ENCODE measurements at regions of chr11 and their contacts with region 1.

Region 1: DNA sequence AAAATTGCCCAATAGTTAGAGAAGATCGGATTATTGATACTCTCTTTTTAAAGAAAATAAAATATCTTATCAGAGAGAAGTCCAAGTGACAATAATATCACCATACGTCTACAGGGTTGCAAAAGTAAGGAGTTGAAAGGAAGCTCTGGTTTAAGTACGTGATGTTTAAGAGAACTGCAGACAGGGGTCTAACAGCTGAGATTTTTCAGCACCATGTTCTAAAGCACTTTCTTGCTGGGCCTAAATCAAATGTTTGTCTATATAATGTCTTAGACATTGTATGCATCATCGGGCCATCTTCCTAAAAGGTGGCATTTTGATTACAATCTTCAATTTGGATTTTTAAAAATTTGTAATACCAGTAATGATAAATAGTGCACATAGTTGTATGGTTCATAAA is 133.3 kb downstream of the RRAS2 start:
- DNase-seq: no peak
- ATAC-seq: no peak
- H3K4me3 ChIP-seq: no peak overlapping the region
- H3K4me3 Mint-ChIP-seq: no peak overlapping the region
- H3K27ac ChIP-seq: no peak overlapping the region
- H3K27ac Mint-ChIP-seq: no peak overlapping the region
- H3K4me1 ChIP-seq: no peaks in the 10 kb centered on the region
- H3K4me1 Mint-ChIP-seq: peaks cover 0 to 3% (median 0%) of the 10 kb centered on the region in 3 donors
- H3K27me3 ChIP-seq: no peaks in the 10 kb centered on the region
- H3K27me3 Mint-ChIP-seq: peaks cover 0 to 4% of the 10 kb centered on the region in 2 donors

Region 2: GRCh38 chr11:13367115-13367514 is 858.6 kb before region 1 on chr11:
- CTCF ChIA-PET with region 1: interaction called in 1 of 2 experiments, 15 read pairs
- POLR2A ChIA-PET with region 1: no interaction called
- DNase-seq: no peak
- ATAC-seq: no peak
- H3K4me3 ChIP-seq: no peak overlapping the region
- H3K4me3 Mint-ChIP-seq: no peak overlapping the region
- H3K27ac ChIP-seq: no peak overlapping the region
- H3K27ac Mint-ChIP-seq: no peak overlapping the region
- H3K4me1 ChIP-seq: no peaks in the 10 kb centered on the region
- H3K4me1 Mint-ChIP-seq: no peaks in the 10 kb centered on the region
- H3K27me3 ChIP-seq: no peaks in the 10 kb centered on the region
- H3K27me3 Mint-ChIP-seq: no peaks in the 10 kb centered on the region

Region 3: GRCh38 chr11:14300661-14301304 is 75.1 kb after region 1 on chr11:
- CTCF ChIA-PET with region 1: no interaction called
- POLR2A ChIA-PET with region 1: no interaction called
- DNase-seq: peak in 33 of 35 experiments; percentile 3 to 70 (median 29)
- ATAC-seq: peak; percentile 68 to 87 (median 80)
- H3K4me3 ChIP-seq: no peak overlapping the region
- H3K4me3 Mint-ChIP-seq: no peak overlapping the region
- H3K27ac ChIP-seq: no peak overlapping the region
- H3K27ac Mint-ChIP-seq: no peak overlapping the region
- H3K4me1 ChIP-seq: peaks cover 0 to 7% of the 10 kb centered on the region in 2 experiments
- H3K4me1 Mint-ChIP-seq: peaks cover 9 to 25% (median 18%) of the 10 kb centered on the region in 3 donors
- H3K27me3 ChIP-seq: no peaks in the 10 kb centered on the region
- H3K27me3 Mint-ChIP-seq: no peaks in the 10 kb centered on the region

Measured in T-cell (primary cell).